Activated CD4-positive, alpha-beta memory T cell treated with anti-CD3 and anti-CD28 coated beads for 36 hours (primary cell): ENCODE measurements at regions of chr4 and their contacts with region 1.

Region 1: GRCh38 chr4:10535912-10536311 is 78.7 kb upstream of the ZNF518B start:
- DNase-seq: no peak
- H3K4me3 Mint-ChIP-seq: no peak overlapping the region
- H3K27ac Mint-ChIP-seq: no peak overlapping the region
- H3K4me1 Mint-ChIP-seq: no peaks in the 10 kb centered on the region
- H3K27me3 Mint-ChIP-seq: peaks cover 2% of the 10 kb centered on the region

Region 2: GRCh38 chr4:10157478-10158332 is 378.2 kb before region 1 on chr4:
- CTCF ChIA-PET with region 1: interaction called, 91 read pairs
- POLR2A ChIA-PET with region 1: no interaction called
- intact Hi-C with region 1: loop called (anchors 1 kb)
- DNase-seq: peak; percentile 62
- H3K4me3 Mint-ChIP-seq: no peak overlapping the region
- H3K27ac Mint-ChIP-seq: no peak overlapping the region
- H3K4me1 Mint-ChIP-seq: peaks cover 29% of the 10 kb centered on the region
- H3K27me3 Mint-ChIP-seq: no peaks in the 10 kb centered on the region

Region 3: DNA sequence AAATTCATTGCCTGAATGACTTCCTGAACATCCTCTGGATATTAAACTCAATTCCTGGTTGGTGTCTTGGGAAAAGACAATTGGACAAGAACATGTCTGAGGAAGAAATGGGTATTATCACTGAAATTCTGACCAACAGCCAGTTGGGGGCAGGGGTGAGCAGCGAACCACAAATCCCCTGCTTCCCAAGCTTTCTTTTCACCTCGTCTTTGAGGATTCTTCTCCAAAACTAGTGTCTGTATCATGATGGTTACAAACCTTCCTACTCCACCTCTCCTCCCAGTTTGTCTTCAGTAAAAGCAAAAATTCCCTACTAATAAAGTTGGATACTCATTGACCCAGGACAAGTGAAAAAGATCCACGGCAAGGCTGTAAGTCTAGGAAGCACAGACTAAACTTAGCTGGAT is 371.0 kb before region 1 on chr4:
- CTCF ChIA-PET with region 1: interaction called, 91 read pairs
- POLR2A ChIA-PET with region 1: no interaction called
- intact Hi-C with region 1: loop called (anchors 1 kb)
- DNase-seq: no peak
- H3K4me3 Mint-ChIP-seq: no peak overlapping the region
- H3K27ac Mint-ChIP-seq: no peak overlapping the region
- H3K4me1 Mint-ChIP-seq: peaks cover 31% of the 10 kb centered on the region
- H3K27me3 Mint-ChIP-seq: no peaks in the 10 kb centered on the region

Region 4: DNA sequence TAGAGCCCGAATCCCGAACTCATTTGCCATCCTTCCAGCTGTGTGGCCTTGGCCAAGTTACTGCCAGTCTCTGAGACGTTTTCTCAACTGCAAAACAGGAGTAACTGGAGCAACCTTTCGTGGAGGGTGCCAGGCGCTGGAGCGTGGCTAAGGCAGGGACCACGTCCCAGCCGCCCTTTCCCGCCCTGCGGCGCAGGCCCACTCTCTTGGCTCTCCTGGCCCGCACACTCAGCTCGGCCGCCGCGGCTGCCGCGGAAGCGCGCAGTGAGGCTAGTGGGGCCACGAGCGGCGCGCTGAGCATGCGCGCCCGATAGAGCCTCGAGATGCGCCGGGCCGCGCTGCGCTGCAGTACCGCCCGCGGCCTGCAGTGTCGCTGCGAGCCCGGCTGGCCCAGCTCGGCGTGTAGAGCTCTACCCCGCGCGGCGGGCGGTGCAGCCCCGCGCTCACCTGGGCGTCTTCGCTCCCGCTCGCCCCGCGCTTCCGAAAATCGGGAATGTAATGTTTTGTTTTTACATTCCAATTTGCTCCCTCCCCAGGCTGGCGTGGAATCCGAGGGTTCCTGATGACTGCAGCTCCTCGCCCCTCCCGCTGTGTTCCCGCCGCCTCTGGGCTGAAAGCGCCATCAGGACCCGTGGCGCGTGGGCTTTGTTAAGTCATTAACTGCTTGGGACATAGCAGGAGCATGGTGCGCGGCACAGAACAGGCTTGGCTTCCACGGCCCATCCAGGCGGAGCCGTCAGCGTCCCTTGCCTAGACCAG is 74.6 kb before region 1 on chr4:
- CTCF ChIA-PET with region 1: interaction called, 29 read pairs
- POLR2A ChIA-PET with region 1: no interaction called
- intact Hi-C with region 1: loop called (anchors 1 kb)
- DNase-seq: peak; percentile 78
- H3K4me3 Mint-ChIP-seq: peak overlapping the region; percentile 72
- H3K27ac Mint-ChIP-seq: no peak overlapping the region
- H3K4me1 Mint-ChIP-seq: peaks cover 25% of the 10 kb centered on the region
- H3K27me3 Mint-ChIP-seq: peaks cover 33% of the 10 kb centered on the region

Region 5: DNA sequence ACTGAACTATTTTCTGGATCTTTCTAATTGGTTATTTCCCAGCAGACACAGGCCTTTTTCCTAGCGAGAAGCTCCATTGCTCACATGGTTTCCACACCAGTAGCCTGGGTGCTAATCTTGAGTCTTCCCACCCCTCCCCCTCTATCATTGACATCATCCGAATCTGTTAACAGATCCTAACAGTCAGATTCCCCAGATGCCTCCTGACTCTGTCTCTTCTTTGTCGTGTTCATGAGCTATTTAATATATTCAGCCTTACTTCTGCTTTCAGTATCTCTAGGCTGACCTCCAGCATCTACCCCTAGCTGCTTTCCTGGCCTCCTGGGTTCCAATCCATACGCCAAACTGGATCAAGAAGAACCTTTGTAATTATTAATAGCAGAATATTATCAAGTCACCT is 63.7 kb after region 1 on chr4:
- CTCF ChIA-PET with region 1: no interaction called
- POLR2A ChIA-PET with region 1: no interaction called
- intact Hi-C with region 1: no loop called
- DNase-seq: no peak
- H3K4me3 Mint-ChIP-seq: no peak overlapping the region
- H3K27ac Mint-ChIP-seq: no peak overlapping the region
- H3K4me1 Mint-ChIP-seq: no peaks in the 10 kb centered on the region
- H3K27me3 Mint-ChIP-seq: peaks cover 1% of the 10 kb centered on the region

Region 6: DNA sequence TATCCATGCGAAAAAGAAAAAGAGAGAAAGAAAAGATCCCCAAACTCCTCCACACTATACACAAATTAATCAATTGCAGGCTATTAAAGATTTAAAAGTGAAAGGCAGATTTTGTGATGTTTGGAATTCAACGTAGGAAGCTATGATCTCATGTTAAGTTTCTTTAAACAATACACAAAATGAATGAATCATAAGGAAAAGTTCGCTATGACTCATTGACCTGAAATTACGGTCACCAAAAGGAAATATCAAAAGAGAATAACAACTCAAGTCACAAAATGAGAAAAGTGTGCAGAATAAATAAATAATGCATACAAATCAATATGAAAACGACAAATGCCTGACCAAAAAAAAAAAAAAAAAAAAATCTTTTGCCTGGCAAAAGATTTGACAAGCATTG is 120.1 kb after region 1 on chr4:
- CTCF ChIA-PET with region 1: no interaction called
- POLR2A ChIA-PET with region 1: no interaction called
- intact Hi-C with region 1: no loop called
- DNase-seq: no peak
- H3K4me3 Mint-ChIP-seq: no peak overlapping the region
- H3K27ac Mint-ChIP-seq: no peak overlapping the region
- H3K4me1 Mint-ChIP-seq: peaks cover 24% of the 10 kb centered on the region
- H3K27me3 Mint-ChIP-seq: peaks cover 8% of the 10 kb centered on the region